HEK293 (cell line): ENCODE measurements at regions of chr10 and their contacts with region 1.

Region 1: GRCh38 chr10:102678842-102679289 is 34.6 kb downstream of the TRIM8 start:
- H3K4me3 ChIP-seq: no peak overlapping the region
- H3K27ac ChIP-seq: peak overlapping the region; percentile 2; the same call in 1 of the 2 replicates
- H3K4me1 ChIP-seq: peaks cover 15% of the 10 kb centered on the region
- CTCF ChIP-seq: peak; percentile 87

Region 2: DNA sequence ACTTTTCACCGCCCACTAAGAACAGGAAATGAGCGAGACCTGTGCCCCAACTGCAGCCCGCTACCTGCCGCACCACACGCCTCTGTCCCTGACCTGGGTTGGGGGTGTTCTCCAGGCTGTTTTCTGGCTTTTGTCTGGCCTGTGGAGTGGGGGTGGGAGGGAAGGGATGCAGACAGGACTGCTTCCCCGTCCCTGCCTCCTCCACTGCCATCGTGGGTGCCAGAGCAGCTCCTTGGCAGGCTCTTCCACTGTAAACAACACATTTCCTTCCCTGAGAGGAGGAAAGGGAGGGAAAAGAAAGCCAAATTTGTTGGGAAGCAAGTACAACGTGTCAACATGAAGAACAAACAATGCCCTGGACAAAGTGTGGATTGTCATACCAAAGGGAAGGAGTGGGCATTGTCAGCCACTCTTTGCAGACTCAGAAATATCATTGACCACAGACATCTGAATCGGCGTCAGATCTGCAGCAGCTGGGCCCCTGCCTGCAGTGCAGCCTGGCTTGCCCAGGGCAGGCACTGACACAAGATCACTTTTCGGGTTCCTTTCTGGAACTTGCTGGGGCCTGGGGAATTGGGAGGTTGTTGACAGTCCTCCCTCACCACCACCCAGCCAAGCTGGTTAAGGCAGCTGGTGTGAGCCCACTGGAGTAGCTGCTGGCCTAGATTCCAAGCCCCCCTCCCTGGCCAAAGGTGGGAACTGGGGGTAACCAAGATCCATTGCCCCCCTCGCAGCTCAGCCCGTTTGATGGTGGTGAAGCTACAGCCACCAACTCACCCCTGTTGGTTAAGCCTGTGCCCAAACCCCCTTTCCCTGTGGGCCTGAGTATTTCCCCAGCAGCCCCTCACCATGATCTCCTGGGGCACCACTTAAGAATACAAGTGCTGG is 57.2 kb before region 1 on chr10:
- CTCF ChIA-PET with region 1: no interaction called
- POLR2A ChIA-PET with region 1: no interaction called
- H3K4me3 ChIP-seq: no peak overlapping the region
- H3K27ac ChIP-seq: no peak overlapping the region
- H3K4me1 ChIP-seq: no peaks in the 10 kb centered on the region
- CTCF ChIP-seq: no peak

Region 3: DNA sequence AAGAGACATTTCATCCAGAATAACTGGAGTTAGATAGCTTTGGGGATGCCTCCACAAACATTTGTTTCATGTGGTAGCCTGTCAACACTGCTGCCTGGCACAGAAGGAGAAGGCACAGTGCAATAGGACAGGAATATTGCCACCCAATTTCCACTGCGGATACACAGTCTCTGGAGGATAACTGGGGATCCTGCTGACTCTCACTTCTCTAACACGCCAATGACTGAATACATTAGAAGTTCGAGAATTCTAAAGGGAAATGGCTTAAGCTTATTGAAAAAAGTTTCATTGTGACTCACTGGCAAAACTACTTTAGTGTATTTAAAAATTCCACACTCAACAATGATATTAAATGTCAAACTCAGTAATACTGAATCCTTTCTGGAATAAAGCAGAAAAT is 22.4 kb after region 1 on chr10:
- CTCF ChIA-PET with region 1: interaction called, 19 read pairs
- POLR2A ChIA-PET with region 1: no interaction called
- H3K4me3 ChIP-seq: no peak overlapping the region
- H3K27ac ChIP-seq: no peak overlapping the region
- H3K4me1 ChIP-seq: no peaks in the 10 kb centered on the region
- CTCF ChIP-seq: no peak